ENCODE measurements at regions of chr2 and their contacts with region 1.

Region 1: GRCh38 chr2:42021464-42021863 is 26.4 kb upstream of the PKDCC start:
- DNase-seq: no peak
- ATAC-seq: no peak
- H3K4me3 Mint-ChIP-seq: no peak overlapping the region
- H3K27ac Mint-ChIP-seq: no peak overlapping the region
- H3K4me1 Mint-ChIP-seq: peaks cover 0 to 4% (median 0%) of the 10 kb centered on the region in 4 donors
- H3K27me3 Mint-ChIP-seq: peaks cover 6 to 22% (median 8%) of the 10 kb centered on the region in 5 donors

Region 2: GRCh38 chr2:41912337-41912736 is 109.1 kb before region 1 on chr2:
- POLR2A ChIA-PET with region 1: no interaction called
- DNase-seq: no peak
- ATAC-seq: no peak
- H3K4me3 Mint-ChIP-seq: no peak overlapping the region
- H3K27ac Mint-ChIP-seq: no peak overlapping the region
- H3K4me1 Mint-ChIP-seq: peaks cover 0 to 1% (median 0%) of the 10 kb centered on the region in 4 donors
- H3K27me3 Mint-ChIP-seq: peaks cover 11 to 35% (median 15%) of the 10 kb centered on the region in 5 donors

Region 3: DNA sequence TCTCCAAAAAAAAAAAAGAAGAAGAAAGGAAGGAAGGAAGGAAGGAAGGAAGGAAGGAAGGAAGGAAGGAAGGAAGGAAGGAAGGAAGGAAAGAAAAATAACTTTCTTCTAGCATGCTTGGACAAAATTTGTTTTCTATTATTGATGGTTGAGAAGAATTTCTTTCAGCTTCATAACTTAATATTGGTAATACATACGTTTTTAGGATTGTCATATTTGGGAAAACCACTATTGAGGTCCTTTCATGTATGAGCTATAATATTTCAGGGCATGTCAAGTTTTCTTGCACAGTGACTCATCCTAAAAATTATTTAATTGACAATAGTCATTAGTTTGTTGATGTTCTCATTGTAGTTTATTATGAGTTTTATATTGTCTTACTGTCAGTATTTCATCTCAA is 40.0 kb before region 1 on chr2:
- POLR2A ChIA-PET with region 1: interaction called, 10 read pairs
- DNase-seq: no peak
- ATAC-seq: no peak
- H3K4me3 Mint-ChIP-seq: no peak overlapping the region
- H3K27ac Mint-ChIP-seq: no peak overlapping the region
- H3K4me1 Mint-ChIP-seq: no peaks in the 10 kb centered on the region
- H3K27me3 Mint-ChIP-seq: peaks cover 1 to 24% (median 9%) of the 10 kb centered on the region in 5 donors

Region 4: DNA sequence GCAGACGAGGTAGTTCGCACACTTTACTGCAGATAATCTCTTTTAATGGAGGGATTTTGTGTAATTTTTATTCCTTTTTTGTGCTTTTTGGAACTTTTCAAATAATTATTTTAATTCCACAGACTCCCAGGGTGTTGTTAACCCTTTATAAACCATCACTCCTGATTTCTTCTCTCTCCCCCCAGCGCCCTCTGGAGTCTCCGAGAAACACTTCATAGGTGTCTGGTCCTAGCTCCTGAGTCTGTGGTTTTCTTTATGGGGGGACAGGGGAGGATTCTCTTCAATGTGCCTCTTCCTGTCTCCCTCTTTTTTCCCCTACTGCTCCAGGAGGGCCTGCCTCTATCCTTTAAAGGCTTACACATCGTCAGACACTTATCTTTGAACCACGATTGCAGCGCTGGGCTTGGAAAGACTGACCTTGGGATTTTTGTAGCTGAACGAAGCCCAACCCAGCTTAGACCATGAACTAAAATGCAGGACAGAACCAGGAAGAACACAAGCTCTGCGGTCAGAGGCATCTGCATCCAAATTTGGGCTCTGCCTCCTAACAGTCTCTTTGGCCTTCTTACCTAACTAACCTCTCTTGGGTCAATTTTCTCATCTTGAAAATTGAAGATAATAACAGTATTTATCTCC is 19.3 kb after region 1 on chr2:
- POLR2A ChIA-PET with region 1: no interaction called
- DNase-seq: no peak
- ATAC-seq: no peak
- H3K4me3 Mint-ChIP-seq: no peak overlapping the region
- H3K27ac Mint-ChIP-seq: no peak overlapping the region
- H3K4me1 Mint-ChIP-seq: peaks cover 0 to 5% (median 0%) of the 10 kb centered on the region in 4 donors
- H3K27me3 Mint-ChIP-seq: peaks cover 10 to 53% (median 40%) of the 10 kb centered on the region in 5 donors

Region 5: GRCh38 chr2:42072349-42073118 is 51.1 kb after region 1 on chr2:
- POLR2A ChIA-PET with region 1: no interaction called
- DNase-seq: no peak
- ATAC-seq: no peak
- H3K4me3 Mint-ChIP-seq: no peak overlapping the region
- H3K27ac Mint-ChIP-seq: no peak overlapping the region
- H3K4me1 Mint-ChIP-seq: no peaks in the 10 kb centered on the region
- H3K27me3 Mint-ChIP-seq: peaks cover 5 to 56% (median 31%) of the 10 kb centered on the region in 5 donors

Measured in naive thymus-derived CD8-positive, alpha-beta T cell (primary cell).